ENCODE measurements at regions of chr2 and their contacts with region 1.

Region 1: DNA sequence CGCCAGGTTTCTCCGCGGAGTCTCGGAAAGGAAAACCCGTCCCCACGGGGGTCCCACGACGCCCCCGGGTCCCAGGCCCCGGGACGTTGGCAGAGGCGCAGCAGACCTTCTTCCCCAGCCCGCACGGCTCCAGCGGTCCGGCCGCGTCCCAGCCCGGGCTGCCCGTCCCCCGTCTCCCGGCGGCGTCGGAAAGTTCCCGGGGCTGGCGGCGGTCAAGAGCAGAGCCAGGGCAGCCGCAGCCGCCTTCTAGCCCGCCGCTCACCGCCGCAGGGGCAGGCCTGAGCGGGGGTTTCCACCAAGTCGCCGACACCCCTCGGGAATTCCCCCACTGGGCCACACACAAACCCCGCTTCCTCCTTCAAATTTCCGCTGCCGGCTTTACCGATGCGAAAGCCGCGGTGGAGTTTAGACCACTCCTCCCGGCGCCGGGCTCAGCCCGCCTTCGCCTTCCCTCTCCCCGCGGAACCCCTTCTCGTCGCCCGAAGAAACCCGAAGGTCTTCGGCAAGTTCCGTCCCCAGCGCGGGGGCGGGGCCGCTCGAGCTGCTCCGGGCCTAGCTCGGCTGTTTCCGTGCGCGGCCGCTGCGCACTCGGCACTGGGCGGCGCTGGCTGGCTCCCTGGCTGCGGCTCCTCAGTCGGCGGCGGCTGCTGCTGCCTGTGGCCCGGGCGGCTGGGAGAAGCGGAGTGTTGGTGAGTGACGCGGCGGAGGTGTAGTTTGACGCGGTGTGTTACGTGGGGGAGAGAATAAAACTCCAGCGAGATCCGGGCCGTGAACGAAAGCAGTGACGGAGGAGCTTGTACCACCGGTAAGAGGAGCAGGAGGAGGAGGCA is at the start of gene CREB1:
- DNase-seq: peak; percentile 94 to 99 (median 98)
- H3K4me3 ChIP-seq: peak within 1 kb of the TSS; percentile 65 to 98 (median 84)
- H3K27ac ChIP-seq: peak within 1 kb of the TSS; percentile 87 to 99 (median 97)
- H3K27me3 ChIP-seq: no peaks in the 10 kb centered on the region
- CTCF ChIP-seq: peak in 41 of 56 donors; percentile 14 to 64 (median 40)
- total RNA-seq, gene CREB1: 52.8 to 106 (median 74.6) TPM

Region 2: DNA sequence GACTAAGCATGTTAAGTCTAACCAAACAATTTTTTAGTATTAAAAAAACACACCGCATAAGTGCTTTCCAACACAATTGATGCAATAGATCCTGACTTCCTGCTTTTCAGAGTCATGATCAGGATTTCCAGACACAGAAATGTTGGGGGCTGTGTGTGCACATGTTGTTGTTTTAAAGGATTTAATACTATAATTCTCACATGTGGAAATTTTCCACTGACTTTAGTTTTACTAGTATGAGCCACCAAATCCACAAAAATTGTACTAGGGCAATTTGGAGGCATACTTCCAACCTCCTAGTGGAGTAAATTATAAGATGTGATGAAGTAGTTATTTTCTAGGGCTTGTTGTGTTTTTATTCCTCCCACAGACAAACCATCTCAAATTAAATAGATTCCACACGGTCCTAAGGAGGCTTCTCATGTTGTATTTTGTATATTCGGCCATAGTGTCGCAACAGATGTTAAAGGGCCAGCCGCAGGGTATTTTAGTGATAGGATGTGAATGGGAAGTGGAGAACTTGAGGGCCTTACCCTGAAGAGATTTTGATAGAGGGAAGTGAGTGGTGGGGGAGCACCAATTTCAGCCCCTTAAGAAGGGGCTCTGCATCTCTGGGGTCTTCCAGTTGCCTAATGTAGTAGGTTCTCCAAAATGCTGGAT is 254.9 kb before region 1 on chr2:
- intact Hi-C with region 1: no loop called
- DNase-seq: no peak
- H3K4me3 ChIP-seq: no peak overlapping the region
- H3K27ac ChIP-seq: no peak overlapping the region
- H3K27me3 ChIP-seq: no peaks in the 10 kb centered on the region
- CTCF ChIP-seq: no peak

Region 3: DNA sequence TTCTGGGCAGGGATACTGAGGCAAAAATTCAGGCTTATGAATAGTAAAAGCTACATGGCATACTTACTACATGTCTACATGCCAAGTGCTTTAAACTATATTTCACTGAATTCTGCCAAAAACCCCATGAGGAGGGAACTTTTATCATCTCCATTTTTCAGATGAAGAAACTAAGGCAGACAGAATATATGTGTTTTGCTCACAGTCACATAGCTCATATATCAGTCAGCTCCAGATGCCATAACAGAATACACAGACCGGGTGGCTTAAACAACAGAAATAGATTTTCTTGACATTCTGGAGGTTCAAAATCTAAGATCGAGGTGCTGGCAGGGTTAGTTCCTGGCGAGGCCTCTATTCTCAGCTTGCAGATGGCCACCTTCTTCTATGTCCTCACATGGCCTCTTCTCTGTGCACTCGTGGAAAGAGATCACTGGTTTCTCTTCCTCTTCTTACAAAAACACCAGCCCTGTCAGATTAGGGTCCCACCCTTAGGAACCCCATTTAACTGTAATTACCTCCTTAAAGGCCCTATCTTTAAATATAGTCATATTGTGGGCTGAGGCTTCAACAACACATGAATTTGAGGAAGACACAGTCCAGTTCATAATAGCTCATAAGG is 26.9 kb before region 1 on chr2:
- intact Hi-C with region 1: loop called in 1 of 2 experiments (anchors 1 kb)
- DNase-seq: no peak
- H3K4me3 ChIP-seq: no peak overlapping the region
- H3K27ac ChIP-seq: peak overlapping the region in 7 of 59 donors; percentile 4 to 27 (median 8)
- H3K27me3 ChIP-seq: no peaks in the 10 kb centered on the region
- CTCF ChIP-seq: no peak

Region 4: GRCh38 chr2:207625018-207625907 is 95.7 kb after region 1 on chr2 and contains the start of gene METTL21A:
- intact Hi-C with region 1: loop called (anchors 1 kb)
- DNase-seq: peak; percentile 75 to 92 (median 86)
- H3K4me3 ChIP-seq: peak within 1 kb of the TSS; percentile 68 to 99 (median 92)
- H3K27ac ChIP-seq: peak within 1 kb of the TSS; percentile 49 to 99 (median 94)
- H3K27me3 ChIP-seq: no peaks in the 10 kb centered on the region
- CTCF ChIP-seq: peak in 51 of 56 donors; percentile 14 to 73 (median 45)
- total RNA-seq, gene METTL21A: 11.8 to 34.3 (median 18.4) TPM

Region 5: GRCh38 chr2:207710814-207711740 is 181.5 kb after region 1 on chr2 and contains the start of gene CCNYL1:
- intact Hi-C with region 1: loop called (anchors 2 to 5 kb)
- DNase-seq: peak; percentile 98 to 99 (median 99)
- H3K4me3 ChIP-seq: peak within 1 kb of the TSS; percentile 65 to 98 (median 91)
- H3K27ac ChIP-seq: peak within 1 kb of the TSS in 56 of 59 donors; percentile 39 to 93 (median 82)
- H3K27me3 ChIP-seq: no peaks in the 10 kb centered on the region
- CTCF ChIP-seq: peak in 48 of 56 donors; percentile 13 to 66 (median 41)
- total RNA-seq, gene CCNYL1: 9.6 to 27.4 (median 16.3) TPM

Region 6: GRCh38 chr2:208025037-208025813 is 495.7 kb after region 1 on chr2 and contains the start of gene PLEKHM3:
- intact Hi-C with region 1: loop called in 1 of 2 experiments (anchors 5 kb)
- DNase-seq: peak; percentile 84 to 93 (median 89)
- H3K4me3 ChIP-seq: peak within 1 kb of the TSS; percentile 61 to 98 (median 88)
- H3K27ac ChIP-seq: peak within 1 kb of the TSS; percentile 43 to 97 (median 88)
- H3K27me3 ChIP-seq: no peaks in the 10 kb centered on the region
- CTCF ChIP-seq: peak in 39 of 56 donors; percentile 3 to 61 (median 33)
- total RNA-seq, gene PLEKHM3: 42.7 to 92.0 (median 63.2) TPM

Region 7: DNA sequence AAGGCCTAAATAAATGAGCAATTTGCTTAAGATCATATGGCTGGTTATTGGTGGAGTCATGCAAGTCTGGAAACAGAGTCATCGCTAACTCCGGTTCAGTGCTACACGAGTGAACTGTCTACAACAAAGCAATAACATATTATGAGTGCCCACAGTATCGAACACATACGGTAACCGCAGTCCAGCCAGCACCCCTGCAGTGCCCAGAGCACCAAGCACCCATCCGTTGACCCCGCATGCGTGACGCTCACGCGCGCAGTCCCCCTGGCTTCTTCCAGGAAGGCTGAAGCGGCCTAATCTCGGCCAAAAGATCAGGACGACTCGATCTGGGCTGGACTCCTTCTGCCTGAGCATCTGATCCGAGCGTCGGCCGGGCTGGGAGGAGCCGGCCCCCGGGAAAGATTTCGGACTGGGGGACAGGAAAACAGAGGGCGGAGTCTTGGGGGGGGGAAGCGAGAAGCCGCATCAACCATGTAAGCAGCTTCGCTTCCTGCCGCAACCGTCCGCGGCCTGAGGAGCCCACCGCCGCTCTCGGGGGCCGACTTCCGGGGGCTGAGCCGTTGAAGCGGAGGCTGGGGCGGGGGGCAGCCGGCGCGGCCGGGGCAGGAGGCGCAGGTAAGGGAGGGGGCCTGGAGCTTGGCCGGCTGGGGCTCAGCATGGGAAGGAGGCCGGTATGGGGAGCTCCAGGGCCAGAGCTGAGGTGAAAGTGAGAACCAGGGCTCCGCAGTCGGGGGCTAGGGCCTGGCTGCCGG is 736.4 kb after region 1 on chr2 and contains the start of gene PIKFYVE:
- intact Hi-C with region 1: loop called in 1 of 2 experiments (anchors 10 kb)
- DNase-seq: peak; percentile 96 to 99 (median 98)
- H3K4me3 ChIP-seq: peak within 1 kb of the TSS; percentile 79 to 100 (median 96)
- H3K27ac ChIP-seq: peak within 1 kb of the TSS; percentile 56 to 98 (median 91)
- H3K27me3 ChIP-seq: no peaks in the 10 kb centered on the region
- CTCF ChIP-seq: peak in 31 of 56 donors; percentile 5 to 55 (median 19)
- total RNA-seq, gene PIKFYVE: 45.3 to 68.9 (median 55.6) TPM